A673 (cell line): ENCODE measurements at regions of chr2 and their contacts with region 1.

Region 1: DNA sequence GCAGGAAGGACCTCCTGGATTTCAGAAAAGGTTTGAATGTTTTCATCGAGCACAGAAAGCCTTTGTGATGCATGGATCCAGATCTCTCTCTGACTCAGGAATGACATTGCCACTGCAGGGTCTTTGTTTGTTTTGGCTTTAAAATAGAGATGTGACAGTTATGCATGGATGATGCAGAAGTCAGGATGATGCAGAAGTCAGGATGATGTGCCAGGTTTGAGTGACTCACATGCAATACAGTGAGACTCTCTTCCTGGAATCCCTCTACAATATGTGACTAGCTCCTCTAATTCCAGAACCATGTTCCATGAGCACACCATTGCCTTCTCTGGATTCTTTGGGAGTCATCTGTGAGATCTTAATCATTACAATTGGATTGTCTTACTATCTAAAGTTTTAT is 177.9 kb upstream of the RAB6C start:
- DNase-seq: no peak
- H3K4me3 ChIP-seq: no peak overlapping the region
- H3K27ac ChIP-seq: no peak overlapping the region
- H3K4me1 ChIP-seq: peaks cover 8% of the 10 kb centered on the region
- H3K27me3 ChIP-seq: peaks cover 23% of the 10 kb centered on the region
- CTCF ChIP-seq: no peak

Region 2: DNA sequence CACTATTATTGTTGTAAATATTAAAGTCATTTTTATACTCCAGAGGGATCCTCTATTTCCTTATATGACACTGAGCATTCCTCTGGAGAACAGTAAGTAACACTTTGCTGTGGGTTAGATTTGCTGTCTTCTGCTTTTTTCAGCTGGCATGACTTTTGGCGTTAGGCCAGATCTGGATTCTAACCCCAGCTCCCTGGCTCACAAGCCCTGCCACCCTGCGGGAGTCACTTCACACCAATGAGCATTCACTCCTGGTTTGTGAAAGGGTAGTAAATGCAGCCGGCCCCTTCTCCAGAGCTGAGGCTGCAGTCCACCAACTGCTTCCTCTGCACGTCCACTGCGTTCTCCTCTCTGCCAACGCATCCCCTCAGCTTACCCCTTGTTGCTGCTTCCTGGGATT is 195.9 kb before region 1 on chr2:
- CTCF ChIA-PET with region 1: no interaction called
- POLR2A ChIA-PET with region 1: no interaction called
- intact Hi-C with region 1: loop called (anchors 5 kb)
- DNase-seq: peak; percentile 87
- H3K4me3 ChIP-seq: peak overlapping the region; percentile 24
- H3K27ac ChIP-seq: peak overlapping the region; percentile 96
- H3K4me1 ChIP-seq: peaks cover 34% of the 10 kb centered on the region
- H3K27me3 ChIP-seq: no peaks in the 10 kb centered on the region
- CTCF ChIP-seq: no peak

Region 3: DNA sequence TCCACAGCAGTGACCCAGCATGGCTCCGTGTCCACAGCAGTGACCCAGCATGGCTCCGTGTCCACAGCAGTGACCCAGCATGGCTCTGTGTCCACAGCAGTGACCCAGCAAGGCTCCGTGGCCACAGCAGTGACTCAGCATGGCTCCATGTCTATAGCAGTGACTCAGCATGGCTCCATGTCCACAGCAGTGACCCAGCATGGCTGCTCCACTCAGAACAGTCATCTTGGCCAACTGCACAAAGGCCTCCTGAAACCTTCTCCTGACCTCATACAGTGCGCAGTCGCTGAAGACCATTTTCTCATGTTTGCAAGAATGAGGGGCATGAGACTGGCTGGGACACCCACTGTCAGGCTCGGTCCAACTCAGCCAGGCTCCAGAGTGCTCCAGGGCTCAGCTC is 155.5 kb before region 1 on chr2:
- CTCF ChIA-PET with region 1: no interaction called
- POLR2A ChIA-PET with region 1: no interaction called
- intact Hi-C with region 1: no loop called
- DNase-seq: no peak
- H3K4me3 ChIP-seq: no peak overlapping the region
- H3K27ac ChIP-seq: no peak overlapping the region
- H3K4me1 ChIP-seq: no peaks in the 10 kb centered on the region
- H3K27me3 ChIP-seq: peaks cover 7% of the 10 kb centered on the region
- CTCF ChIP-seq: no peak